Body of pancreas (tissue), 4 donors: ENCODE measurements at regions of chr12 and their contacts with region 1.

Region 1: DNA sequence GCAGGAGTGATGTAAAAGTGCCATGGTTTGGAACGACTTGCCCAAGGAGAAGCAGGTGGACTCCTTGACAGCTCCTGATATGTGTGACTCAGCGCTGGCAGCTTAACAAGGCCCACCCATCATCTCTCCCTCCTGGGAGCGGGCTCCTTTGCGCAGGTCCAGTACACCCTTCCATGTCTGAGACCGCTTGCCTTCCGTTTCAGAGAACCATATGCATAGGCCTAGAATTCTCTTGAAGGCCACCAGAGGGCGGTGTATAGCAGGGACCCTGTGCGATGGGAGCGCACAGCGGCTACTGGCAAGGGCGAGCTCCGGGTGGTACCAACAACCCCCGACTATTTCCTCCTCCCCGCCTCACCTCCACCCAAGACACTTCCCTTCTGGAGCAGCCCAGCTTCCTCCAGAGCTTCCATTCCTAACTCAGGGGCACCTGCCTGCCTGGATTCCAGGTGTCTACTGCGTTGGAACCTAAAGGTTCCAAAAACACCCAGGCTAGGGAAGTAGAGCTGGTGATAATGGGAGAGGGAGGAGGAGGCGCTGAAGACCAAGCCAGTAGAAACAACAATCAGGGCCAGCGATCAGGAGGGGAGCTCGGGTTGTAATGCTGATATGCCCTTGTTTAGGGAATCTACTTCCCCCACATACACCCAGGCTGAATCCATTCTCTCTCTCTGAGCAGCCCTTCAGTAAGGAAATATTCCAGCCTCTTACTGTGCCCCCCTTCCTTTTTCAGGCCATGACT is 6.2 kb downstream of the DHH start:
- DNase-seq: peak; percentile 71 to 90 (median 86)
- ATAC-seq: peak; percentile 94
- H3K4me3 ChIP-seq: no peak overlapping the region
- H3K27ac ChIP-seq: no peak overlapping the region
- H3K4me1 ChIP-seq: peaks cover 46% of the 10 kb centered on the region
- H3K27me3 ChIP-seq: peaks cover 6 to 46% of the 10 kb centered on the region in 2 donors
- CTCF ChIP-seq: peak; percentile 78 to 86 (median 83)
- POLR2A ChIP-seq: no peak

Region 2: GRCh38 chr12:49232940-49233841 is 144.8 kb after region 1 on chr12:
- intact Hi-C with region 1: loop called (anchors 10 kb)
- DNase-seq: peak; percentile 37 to 60 (median 48)
- ATAC-seq: no peak
- H3K4me3 ChIP-seq: no peak overlapping the region
- H3K27ac ChIP-seq: peak overlapping the region in 3 of 4 donors; percentile 40 to 92 (median 58)
- H3K4me1 ChIP-seq: peaks cover 22% of the 10 kb centered on the region
- H3K27me3 ChIP-seq: no peaks in the 10 kb centered on the region
- CTCF ChIP-seq: peak in 2 of 7 experiments; percentile 18
- POLR2A ChIP-seq: no peak